Vagina (tissue), 2 donors: ENCODE measurements at regions of chr5 and their contacts with region 1.

Region 1: DNA sequence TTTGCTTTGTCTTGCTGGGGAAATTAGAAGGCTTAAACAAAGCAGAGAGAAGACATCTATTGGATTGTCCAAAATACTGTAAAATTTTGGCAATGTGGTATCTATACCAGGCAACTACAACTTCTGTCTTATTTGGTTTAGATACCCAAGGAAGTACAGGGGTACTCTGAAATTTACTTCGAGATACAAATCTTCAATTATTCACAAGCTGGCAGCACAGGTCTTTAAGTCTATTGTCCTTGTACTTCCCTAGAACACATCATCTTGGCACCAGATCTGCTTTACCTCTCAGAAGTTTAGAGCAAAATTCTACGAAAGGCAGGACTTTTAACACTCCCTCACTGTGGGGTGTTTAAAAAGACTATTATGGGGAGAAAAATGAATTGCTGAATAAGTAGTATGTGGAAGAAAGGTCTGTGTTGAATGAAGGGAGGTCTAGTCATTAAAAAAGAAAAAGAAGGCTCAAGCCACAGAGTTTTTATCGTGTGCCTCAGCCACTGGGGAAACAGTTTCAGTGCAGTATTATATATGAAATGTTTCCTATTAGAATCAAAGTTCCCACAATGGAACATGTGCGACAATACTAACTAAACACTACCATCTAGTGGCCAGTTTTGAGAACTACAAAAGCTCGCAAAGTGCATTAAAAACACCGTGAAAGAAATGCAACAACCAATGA is 93.7 kb downstream of the PDE4D start:
- DNase-seq: no peak
- H3K4me3 ChIP-seq: peak overlapping the region in 1 of 2 donors; percentile 17
- H3K27ac ChIP-seq: peak overlapping the region; percentile 65
- H3K4me1 ChIP-seq: peaks cover 14% of the 10 kb centered on the region
- H3K27me3 ChIP-seq: no peaks in the 10 kb centered on the region
- CTCF ChIP-seq: peak; percentile 76 to 87 (median 79)
- POLR2A ChIP-seq: no peak

Region 2: GRCh38 chr5:59380350-59380951 is 419.4 kb before region 1 on chr5:
- intact Hi-C with region 1: loop called (anchors 10 kb)
- DNase-seq: no peak
- H3K4me3 ChIP-seq: no peak overlapping the region
- H3K27ac ChIP-seq: no peak overlapping the region
- H3K4me1 ChIP-seq: no peaks in the 10 kb centered on the region
- H3K27me3 ChIP-seq: no peaks in the 10 kb centered on the region
- CTCF ChIP-seq: peak; percentile 34 to 68 (median 41)
- POLR2A ChIP-seq: no peak

Region 3: GRCh38 chr5:59401637-59402036 is 398.2 kb before region 1 on chr5:
- intact Hi-C with region 1: loop called (anchors 10 kb)
- DNase-seq: no peak
- H3K4me3 ChIP-seq: no peak overlapping the region
- H3K27ac ChIP-seq: no peak overlapping the region
- H3K4me1 ChIP-seq: no peaks in the 10 kb centered on the region
- H3K27me3 ChIP-seq: no peaks in the 10 kb centered on the region
- CTCF ChIP-seq: no peak
- POLR2A ChIP-seq: no peak

Region 4: DNA sequence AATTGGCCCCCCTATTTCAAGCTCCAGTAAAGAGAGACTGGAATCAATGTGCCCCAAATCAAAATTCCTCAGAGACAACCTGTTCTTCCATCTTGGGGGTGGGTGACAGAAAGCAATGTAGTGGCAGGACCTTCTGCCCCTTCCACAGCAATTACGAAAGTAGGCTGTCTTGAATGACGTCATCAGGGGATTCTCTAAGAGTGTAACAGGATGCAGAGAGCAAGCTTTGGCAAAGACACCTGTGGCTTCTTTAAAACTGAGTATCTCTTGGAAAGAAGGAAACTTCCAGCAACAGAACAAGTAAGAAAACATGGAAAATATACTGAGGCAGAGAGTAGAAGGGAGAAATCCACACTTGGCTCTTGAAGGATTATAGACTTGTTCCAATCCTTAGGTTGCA is 341.3 kb after region 1 on chr5:
- intact Hi-C with region 1: no loop called
- DNase-seq: no peak
- H3K4me3 ChIP-seq: no peak overlapping the region
- H3K27ac ChIP-seq: no peak overlapping the region
- H3K4me1 ChIP-seq: no peaks in the 10 kb centered on the region
- H3K27me3 ChIP-seq: no peaks in the 10 kb centered on the region
- CTCF ChIP-seq: no peak
- POLR2A ChIP-seq: no peak

Region 5: DNA sequence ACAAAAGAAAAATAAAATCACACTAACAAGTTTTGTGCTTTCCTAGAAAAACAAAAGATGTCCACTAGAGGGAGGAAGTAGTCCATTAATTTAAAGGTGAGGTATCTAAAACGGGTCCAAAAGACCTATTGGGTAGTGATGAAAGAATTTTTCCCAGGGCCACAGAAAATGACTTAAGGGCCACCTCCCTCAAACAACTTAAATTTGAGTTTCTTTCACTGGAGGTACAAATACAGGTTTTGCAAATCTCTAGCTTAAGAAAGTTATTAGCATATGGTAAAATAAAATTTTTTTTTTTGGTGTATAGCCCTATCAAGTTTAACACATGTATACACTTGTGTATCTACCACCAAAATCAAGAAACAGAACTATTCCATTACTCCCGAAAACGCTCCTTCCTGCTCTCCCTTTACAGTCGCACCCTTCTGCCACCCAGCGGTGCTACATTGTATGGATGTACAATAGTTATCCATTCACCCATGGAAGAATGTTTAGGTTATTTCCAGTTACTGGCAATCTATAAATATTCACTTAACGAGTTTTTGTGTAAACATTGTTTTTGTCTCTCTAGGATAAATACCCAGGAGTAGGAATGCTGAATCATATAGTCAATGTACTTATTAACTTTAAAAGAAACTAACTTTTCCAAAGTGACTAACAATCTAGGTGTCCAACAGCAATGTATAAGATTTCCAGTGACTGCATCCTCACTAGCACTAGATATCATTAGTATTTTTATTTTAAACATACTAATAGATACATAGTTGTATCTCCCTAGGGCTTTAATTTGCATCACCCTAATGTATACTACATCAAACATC is 878.2 kb after region 1 on chr5:
- intact Hi-C with region 1: loop called (anchors 10 kb)
- DNase-seq: no peak
- H3K4me3 ChIP-seq: no peak overlapping the region
- H3K27ac ChIP-seq: no peak overlapping the region
- H3K4me1 ChIP-seq: no peaks in the 10 kb centered on the region
- H3K27me3 ChIP-seq: no peaks in the 10 kb centered on the region
- CTCF ChIP-seq: peak in 2 of 3 experiments; percentile 38 to 51
- POLR2A ChIP-seq: no peak